T-cell (primary cell): ENCODE measurements at regions of chr7 and their contacts with region 1.

Region 1: DNA sequence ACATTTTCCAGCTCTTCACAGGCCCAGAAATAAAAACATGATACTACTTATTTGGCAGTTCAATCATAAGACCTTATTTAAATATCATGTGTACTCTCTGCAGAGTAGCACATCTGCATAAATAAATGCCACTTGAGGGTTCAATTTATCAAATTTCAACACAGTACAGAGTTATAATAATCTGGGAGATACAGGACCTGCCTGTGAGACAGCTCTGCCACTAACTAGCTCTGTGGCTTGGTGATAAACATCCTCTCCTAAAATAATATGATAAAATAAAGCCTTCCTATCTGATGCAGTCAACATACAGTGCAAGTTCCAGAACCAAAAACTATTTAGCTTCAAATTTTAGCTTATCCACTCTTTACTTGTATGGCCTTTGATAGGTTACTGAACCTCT is 90.9 kb upstream of the GATAD1 start:
- DNase-seq: no peak
- ATAC-seq: no peak
- H3K4me3 ChIP-seq: no peak overlapping the region
- H3K4me3 Mint-ChIP-seq: no peak overlapping the region
- H3K27ac ChIP-seq: no peak overlapping the region
- H3K27ac Mint-ChIP-seq: no peak overlapping the region
- H3K4me1 ChIP-seq: no peaks in the 10 kb centered on the region
- H3K4me1 Mint-ChIP-seq: no peaks in the 10 kb centered on the region
- H3K27me3 ChIP-seq: no peaks in the 10 kb centered on the region
- H3K27me3 Mint-ChIP-seq: no peaks in the 10 kb centered on the region

Region 2: DNA sequence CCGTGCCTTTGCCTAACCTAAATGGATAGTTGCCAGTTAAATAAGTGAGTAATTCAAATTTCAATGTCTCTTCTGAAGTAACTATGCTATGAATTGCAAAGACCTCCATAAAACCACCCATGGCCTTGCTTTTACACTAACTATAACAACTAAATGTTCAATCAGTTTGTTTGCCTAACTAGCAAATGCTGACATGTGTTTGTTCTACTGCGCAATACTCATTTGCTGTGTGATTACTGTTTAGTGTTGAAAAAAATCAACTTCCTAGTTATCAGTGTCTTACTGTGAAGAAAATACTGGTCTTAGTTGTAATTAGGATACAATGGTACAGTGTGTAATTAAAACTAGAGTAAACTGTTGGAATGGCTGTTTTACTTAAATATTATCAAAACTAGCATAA is 43.6 kb after region 1 on chr7:
- CTCF ChIA-PET with region 1: interaction called in 1 of 2 experiments, 10 read pairs
- POLR2A ChIA-PET with region 1: no interaction called
- DNase-seq: no peak
- ATAC-seq: no peak
- H3K4me3 ChIP-seq: no peak overlapping the region
- H3K4me3 Mint-ChIP-seq: no peak overlapping the region
- H3K27ac ChIP-seq: no peak overlapping the region
- H3K27ac Mint-ChIP-seq: no peak overlapping the region
- H3K4me1 ChIP-seq: peaks cover 0 to 12% of the 10 kb centered on the region in 2 experiments
- H3K4me1 Mint-ChIP-seq: peaks cover 14 to 19% (median 17%) of the 10 kb centered on the region in 3 donors
- H3K27me3 ChIP-seq: no peaks in the 10 kb centered on the region
- H3K27me3 Mint-ChIP-seq: no peaks in the 10 kb centered on the region

Region 3: DNA sequence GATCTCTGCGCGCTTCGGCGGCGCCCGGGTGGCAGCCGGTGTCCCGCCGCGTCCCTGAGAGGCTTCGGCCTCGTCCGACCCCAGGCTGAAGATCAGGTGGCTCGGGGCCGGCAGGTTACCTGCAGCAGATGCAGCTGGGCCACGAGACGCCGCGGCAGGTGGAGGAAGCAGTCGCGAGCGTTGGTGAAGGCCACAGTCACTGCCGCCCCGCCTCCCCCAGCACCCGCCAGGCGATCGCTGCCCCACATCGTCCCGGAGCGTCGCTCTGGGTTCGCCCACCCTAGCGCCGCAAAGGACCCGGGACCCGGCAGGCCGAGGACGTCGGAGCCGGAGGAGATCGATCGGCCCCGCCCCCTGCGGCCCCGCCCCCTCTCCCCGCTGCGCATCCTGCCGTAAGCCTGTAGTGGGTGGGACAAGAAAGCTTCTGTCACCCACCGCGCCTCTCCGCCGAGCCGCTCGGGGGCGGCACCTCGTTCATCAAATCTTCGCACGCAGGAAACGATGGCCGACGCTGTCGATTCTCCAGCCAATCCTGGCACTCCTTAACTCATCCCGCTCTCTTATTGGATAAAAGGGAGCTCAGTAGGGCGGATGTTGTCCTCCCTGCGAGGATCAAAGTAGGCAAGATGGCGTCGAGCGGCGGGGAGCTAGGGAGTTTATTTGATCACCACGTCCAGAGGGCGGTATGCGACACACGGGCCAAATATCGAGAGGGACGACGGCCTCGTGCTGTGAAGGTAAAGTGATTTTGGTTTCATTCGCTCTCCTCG is 172.0 kb after region 1 on chr7 and contains the starts of genes PEX1 and RBM48:
- CTCF ChIA-PET with region 1: no interaction called
- POLR2A ChIA-PET with region 1: no interaction called
- DNase-seq: peak; percentile 85 to 99 (median 96)
- ATAC-seq: peak; percentile 90 to 95 (median 94)
- H3K4me3 ChIP-seq: peak within 1 kb of the TSS; percentile 87 to 96
- H3K4me3 Mint-ChIP-seq: peak within 1 kb of the TSS; percentile 83 to 85 (median 84)
- H3K27ac ChIP-seq: peak within 1 kb of the TSS; percentile 93
- H3K27ac Mint-ChIP-seq: peak within 1 kb of the TSS; percentile 89 to 96
- H3K4me1 ChIP-seq: peaks cover 9 to 19% of the 10 kb centered on the region in 2 experiments
- H3K4me1 Mint-ChIP-seq: peaks cover 43 to 61% (median 49%) of the 10 kb centered on the region in 3 donors
- H3K27me3 ChIP-seq: no peaks in the 10 kb centered on the region
- H3K27me3 Mint-ChIP-seq: no peaks in the 10 kb centered on the region
- total RNA-seq, gene PEX1: 24.0 to 33.8 (median 29.2) TPM
- total RNA-seq, gene RBM48: 23.9 to 37.1 (median 29.6) TPM